Activated CD4-positive, alpha-beta memory T cell treated with anti-CD3 and anti-CD28 coated beads for 36 hours (primary cell): ENCODE measurements at regions of chr1 and their contacts with region 1.

Region 1: GRCh38 chr1:30718636-30719405 is 4.6 kb downstream of the MATN1 start:
- DNase-seq: peak; percentile 88
- H3K4me3 Mint-ChIP-seq: peak overlapping the region; percentile 84
- H3K27ac Mint-ChIP-seq: peak overlapping the region; percentile 93
- H3K4me1 Mint-ChIP-seq: peaks cover 26% of the 10 kb centered on the region
- H3K27me3 Mint-ChIP-seq: no peaks in the 10 kb centered on the region

Region 2: GRCh38 chr1:30461639-30462038 is 257.2 kb before region 1 on chr1:
- CTCF ChIA-PET with region 1: no interaction called
- POLR2A ChIA-PET with region 1: no interaction called
- intact Hi-C with region 1: no loop called
- DNase-seq: no peak
- H3K4me3 Mint-ChIP-seq: no peak overlapping the region
- H3K27ac Mint-ChIP-seq: no peak overlapping the region
- H3K4me1 Mint-ChIP-seq: no peaks in the 10 kb centered on the region
- H3K27me3 Mint-ChIP-seq: peaks cover 18% of the 10 kb centered on the region

Region 3: DNA sequence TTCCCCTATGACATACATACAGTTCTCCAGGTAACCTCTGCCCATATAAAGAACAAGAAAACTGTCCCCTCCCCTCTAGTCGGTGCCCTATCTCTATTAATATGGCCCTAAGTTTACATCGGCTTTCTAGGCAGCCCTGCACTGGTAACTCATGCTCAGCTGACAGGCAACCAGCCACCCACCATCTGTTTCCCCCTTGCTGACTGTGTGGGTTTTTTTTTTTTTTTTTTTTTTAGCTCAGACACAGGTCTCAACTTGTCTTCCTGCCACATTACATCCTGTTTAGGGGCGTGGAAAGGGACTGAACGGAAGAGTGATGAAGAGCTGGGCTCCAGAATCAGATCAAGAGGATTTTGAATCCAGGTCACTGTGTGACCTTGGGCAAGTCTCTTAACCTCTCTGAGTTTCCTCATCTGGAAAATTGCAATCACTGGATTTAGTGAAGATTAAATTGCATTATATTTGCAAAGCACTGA is 24.8 kb after region 1 on chr1:
- CTCF ChIA-PET with region 1: interaction called, 61 read pairs
- POLR2A ChIA-PET with region 1: interaction called, 9 read pairs
- intact Hi-C with region 1: loop called (anchors 1 kb)
- DNase-seq: peak; percentile 80
- H3K4me3 Mint-ChIP-seq: peak overlapping the region; percentile 50
- H3K27ac Mint-ChIP-seq: peak overlapping the region; percentile 96
- H3K4me1 Mint-ChIP-seq: peaks cover 92% of the 10 kb centered on the region
- H3K27me3 Mint-ChIP-seq: no peaks in the 10 kb centered on the region

Region 4: DNA sequence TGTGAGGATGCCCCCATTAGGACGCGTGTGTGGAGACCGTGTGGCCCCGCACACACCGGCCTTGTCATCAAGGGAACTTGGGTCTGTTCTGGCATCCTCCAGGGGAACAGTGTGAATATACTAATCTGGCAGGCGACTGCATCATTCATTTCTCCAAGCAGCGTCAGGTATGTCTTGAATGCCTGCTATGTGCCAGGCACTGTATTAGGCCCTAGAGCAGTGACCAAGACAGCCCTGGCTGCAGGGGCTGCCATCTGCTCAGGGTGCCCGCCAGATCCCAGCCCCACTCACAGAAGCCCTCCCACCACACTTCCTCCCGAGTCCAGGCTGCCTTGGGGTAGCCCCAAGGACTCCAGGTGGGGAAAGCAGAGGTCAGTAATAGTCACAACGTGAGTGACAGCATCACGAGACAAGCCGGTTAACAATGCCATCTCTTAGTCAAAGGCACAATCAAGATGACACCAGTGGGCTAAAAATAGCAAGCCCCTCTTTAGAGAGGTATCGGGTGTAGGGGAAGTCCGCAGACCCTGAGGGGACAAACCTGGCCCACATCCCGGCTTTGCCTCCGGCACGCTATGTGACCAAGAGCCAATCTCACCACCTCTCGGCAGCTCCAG is 46.2 kb after region 1 on chr1:
- CTCF ChIA-PET with region 1: interaction called, 123 read pairs
- POLR2A ChIA-PET with region 1: interaction called, 19 read pairs
- intact Hi-C with region 1: no loop called
- DNase-seq: no peak
- H3K4me3 Mint-ChIP-seq: no peak overlapping the region
- H3K27ac Mint-ChIP-seq: peak overlapping the region; percentile 42
- H3K4me1 Mint-ChIP-seq: peaks cover 46% of the 10 kb centered on the region
- H3K27me3 Mint-ChIP-seq: no peaks in the 10 kb centered on the region

Region 5: DNA sequence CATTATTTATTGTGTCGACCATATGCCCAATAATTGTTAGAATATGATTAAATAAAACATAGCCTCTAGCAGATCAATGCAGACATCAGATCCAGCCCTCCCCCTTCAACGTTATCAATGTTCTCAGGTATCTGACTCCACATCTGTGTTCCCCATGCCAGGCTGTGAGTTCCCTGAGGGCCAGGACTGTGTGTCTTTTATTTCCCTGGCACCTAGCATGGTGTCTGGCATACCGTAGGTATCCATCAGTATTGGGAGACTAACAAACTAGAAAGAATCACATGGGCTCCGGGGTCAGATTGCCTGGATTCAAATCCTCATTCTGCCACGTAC is 141.5 kb after region 1 on chr1:
- CTCF ChIA-PET with region 1: no interaction called
- POLR2A ChIA-PET with region 1: no interaction called
- intact Hi-C with region 1: no loop called
- DNase-seq: no peak
- H3K4me3 Mint-ChIP-seq: no peak overlapping the region
- H3K27ac Mint-ChIP-seq: no peak overlapping the region
- H3K4me1 Mint-ChIP-seq: no peaks in the 10 kb centered on the region
- H3K27me3 Mint-ChIP-seq: peaks cover 9% of the 10 kb centered on the region

Region 6: DNA sequence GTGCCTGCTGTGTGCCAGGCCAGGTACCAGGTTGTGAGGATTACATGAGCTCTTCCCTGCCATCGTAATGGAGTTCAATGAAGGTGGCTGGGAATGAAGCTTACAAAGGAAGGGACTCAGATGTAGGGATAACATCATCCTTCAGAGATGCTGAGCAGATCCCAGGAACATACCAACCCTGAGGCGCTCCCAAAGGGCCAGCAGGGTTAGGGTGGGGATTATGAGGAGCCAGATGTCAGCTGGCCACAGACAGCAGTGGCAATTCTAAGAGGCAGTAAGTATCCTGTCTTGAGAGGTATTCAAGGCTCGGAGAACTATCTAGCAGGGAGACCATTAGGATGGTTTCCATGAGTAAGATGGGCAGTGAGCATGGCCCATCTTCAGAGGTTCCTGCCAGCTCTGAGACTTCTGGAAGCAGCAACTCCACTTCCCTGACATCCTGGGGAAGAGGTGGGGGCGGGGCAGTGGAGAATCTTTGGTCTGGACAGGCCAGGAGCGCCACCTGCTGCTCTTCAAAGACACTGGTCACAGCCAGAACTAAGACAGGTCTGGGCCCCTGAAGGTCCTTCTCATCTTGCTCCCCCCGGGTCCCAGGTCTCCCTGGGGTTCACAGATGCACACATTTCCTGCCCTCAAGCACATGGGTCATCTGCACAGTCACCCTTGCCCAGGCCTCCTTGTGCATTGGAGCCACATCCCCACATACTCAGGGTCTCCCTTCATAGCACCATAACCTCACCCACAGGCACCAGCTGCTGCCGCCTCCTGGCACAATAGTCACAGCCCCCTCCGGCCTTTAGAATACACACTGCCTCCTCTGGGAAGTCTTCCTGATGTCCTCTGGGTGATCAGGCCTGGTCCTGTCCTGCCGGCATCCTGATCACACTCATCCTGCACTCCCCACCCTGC is 192.5 kb after region 1 on chr1:
- CTCF ChIA-PET with region 1: interaction called, 36 read pairs
- POLR2A ChIA-PET with region 1: interaction called, 4 read pairs
- intact Hi-C with region 1: loop called (anchors 1 kb)
- DNase-seq: peak; percentile 74
- H3K4me3 Mint-ChIP-seq: no peak overlapping the region
- H3K27ac Mint-ChIP-seq: no peak overlapping the region
- H3K4me1 Mint-ChIP-seq: peaks cover 8% of the 10 kb centered on the region
- H3K27me3 Mint-ChIP-seq: peaks cover 25% of the 10 kb centered on the region

Region 7: DNA sequence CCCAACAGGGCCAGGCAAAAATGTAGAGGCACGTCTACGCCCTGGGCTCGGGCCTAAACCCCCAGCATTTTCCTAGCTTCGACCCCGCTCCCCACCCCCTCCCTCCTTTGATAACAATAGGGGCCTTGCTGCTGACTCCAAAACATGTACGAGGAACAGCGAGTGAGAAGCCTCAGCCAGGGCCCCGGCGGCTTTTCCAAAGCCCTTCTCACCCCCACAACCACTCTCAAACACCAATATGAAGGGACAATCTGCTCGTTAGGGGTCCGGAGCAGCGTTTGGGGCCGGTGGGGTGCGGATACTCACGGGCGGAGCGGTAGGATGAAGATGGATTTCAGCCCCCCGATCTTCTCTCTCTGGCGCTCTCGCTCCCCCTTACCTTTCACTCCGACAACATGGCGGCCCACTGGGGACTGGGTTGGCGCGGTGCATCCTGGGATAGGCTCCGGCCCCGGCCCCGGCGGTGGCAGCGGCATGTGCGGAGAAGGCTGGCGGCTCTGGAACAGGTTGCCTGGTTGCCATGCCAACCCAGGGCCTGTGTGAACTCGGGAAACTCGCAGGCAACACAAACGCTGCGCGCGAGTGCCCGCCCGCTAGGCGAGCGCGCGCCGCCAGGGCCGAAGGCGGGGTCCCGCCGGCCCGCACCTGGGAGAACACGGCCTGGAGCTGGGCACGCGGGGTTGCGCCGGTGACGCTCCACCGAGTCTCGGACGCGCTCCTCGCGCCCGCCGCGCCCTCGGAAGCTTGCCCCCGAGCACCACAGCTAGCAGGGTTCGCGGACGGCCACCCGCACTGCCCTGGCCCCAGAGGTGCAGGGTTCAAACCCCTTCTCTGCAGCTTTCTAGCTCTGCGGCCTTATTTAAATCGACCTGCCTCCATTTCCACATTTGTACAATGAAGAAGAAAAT is 346.7 kb after region 1 on chr1 and contains the start of gene PUM1:
- CTCF ChIA-PET with region 1: no interaction called
- POLR2A ChIA-PET with region 1: no interaction called
- intact Hi-C with region 1: loop called (anchors 2 kb)
- DNase-seq: peak; percentile 99
- H3K4me3 Mint-ChIP-seq: peak within 1 kb of the TSS; percentile 98
- H3K27ac Mint-ChIP-seq: peak within 1 kb of the TSS; percentile 100
- H3K4me1 Mint-ChIP-seq: peaks cover 22% of the 10 kb centered on the region
- H3K27me3 Mint-ChIP-seq: peaks cover 2% of the 10 kb centered on the region
- total RNA-seq, gene PUM1: 77.8 to 80.5 TPM